Transverse colon (tissue), 4 donors: ENCODE measurements at regions of chr1 and their contacts with region 1.

Region 1: DNA sequence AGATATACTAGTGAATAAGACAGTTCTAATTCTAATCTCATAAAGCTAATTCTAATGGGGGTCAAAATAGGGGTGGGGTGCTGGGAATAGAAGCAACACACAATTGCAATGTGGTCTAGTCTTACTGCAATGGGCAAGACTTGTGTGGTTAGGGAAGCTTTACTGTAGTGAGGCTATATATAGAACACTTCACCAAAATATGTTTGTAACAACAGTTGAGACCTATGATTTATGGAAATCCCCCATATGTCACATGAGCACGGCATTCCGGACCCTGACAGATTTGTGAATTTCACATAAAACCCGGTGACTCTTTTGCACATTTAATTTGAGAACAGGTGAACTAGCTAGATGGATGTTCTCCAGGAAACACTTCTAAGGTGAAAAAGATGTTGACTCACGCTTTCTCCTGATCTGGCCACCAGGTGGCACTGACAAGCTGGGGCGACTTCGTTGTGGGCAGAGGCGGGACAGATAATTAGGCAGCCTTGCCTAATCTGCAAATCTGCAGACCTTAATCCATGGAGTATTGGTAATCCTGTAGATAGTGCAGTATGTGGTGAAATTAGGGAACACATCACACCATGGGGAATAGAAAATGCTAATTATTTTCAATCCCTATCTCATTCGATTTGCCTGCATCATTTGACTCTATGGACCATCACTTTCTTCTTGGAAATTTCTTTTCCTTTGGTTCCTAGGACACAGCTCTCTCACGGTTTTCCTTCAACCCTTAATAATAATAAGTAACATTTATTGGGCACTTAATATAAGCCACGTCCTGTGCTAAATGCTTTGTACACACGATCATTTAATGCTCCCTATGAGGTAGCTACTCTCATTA is 37.7 kb downstream of the KIAA0040 start:
- DNase-seq: peak; percentile 76
- H3K4me3 ChIP-seq: no peak overlapping the region
- H3K27ac ChIP-seq: no peak overlapping the region
- H3K4me1 ChIP-seq: peaks cover 0 to 8% (median 0%) of the 10 kb centered on the region in 4 donors
- H3K27me3 ChIP-seq: peaks cover 24% of the 10 kb centered on the region
- CTCF ChIP-seq: peak; percentile 86 to 88 (median 88)
- EP300 ChIP-seq: no peak
- POLR2A ChIP-seq: no peak

Region 2: GRCh38 chr1:174942547-174943255 is 212.2 kb before region 1 on chr1:
- in situ Hi-C with region 1: no loop called
- intact Hi-C with region 1: no loop called
- DNase-seq: no peak
- H3K4me3 ChIP-seq: no peak overlapping the region
- H3K27ac ChIP-seq: no peak overlapping the region
- H3K4me1 ChIP-seq: peaks cover 0 to 34% (median 6%) of the 10 kb centered on the region in 4 donors
- H3K27me3 ChIP-seq: no peaks in the 10 kb centered on the region
- CTCF ChIP-seq: no peak
- EP300 ChIP-seq: no peak
- POLR2A ChIP-seq: no peak

Region 3: GRCh38 chr1:175124861-175125260 is 30.0 kb before region 1 on chr1:
- in situ Hi-C with region 1: no loop called
- intact Hi-C with region 1: no loop called
- DNase-seq: no peak
- H3K4me3 ChIP-seq: no peak overlapping the region
- H3K27ac ChIP-seq: peak overlapping the region in 3 of 4 donors; percentile 8 to 55 (median 15)
- H3K4me1 ChIP-seq: peaks cover 6 to 30% (median 10%) of the 10 kb centered on the region in 4 donors
- H3K27me3 ChIP-seq: no peaks in the 10 kb centered on the region
- CTCF ChIP-seq: no peak
- EP300 ChIP-seq: no peak
- POLR2A ChIP-seq: no peak

Region 4: GRCh38 chr1:175221666-175222175 is 66.9 kb after region 1 on chr1:
- in situ Hi-C with region 1: loop called in 1 of 4 experiments (anchors 5 kb)
- intact Hi-C with region 1: no loop called
- DNase-seq: no peak
- H3K4me3 ChIP-seq: no peak overlapping the region
- H3K27ac ChIP-seq: peak overlapping the region in 2 of 4 donors; percentile 4 to 22
- H3K4me1 ChIP-seq: peaks cover 0 to 31% (median 9%) of the 10 kb centered on the region in 4 donors
- H3K27me3 ChIP-seq: no peaks in the 10 kb centered on the region
- CTCF ChIP-seq: peak in 4 of 5 experiments; percentile 25 to 49 (median 34)
- EP300 ChIP-seq: no peak
- POLR2A ChIP-seq: no peak

Region 5: GRCh38 chr1:175274368-175274767 is 119.5 kb after region 1 on chr1:
- in situ Hi-C with region 1: no loop called
- intact Hi-C with region 1: no loop called
- DNase-seq: no peak
- H3K4me3 ChIP-seq: no peak overlapping the region
- H3K27ac ChIP-seq: no peak overlapping the region
- H3K4me1 ChIP-seq: no peaks in the 10 kb centered on the region
- H3K27me3 ChIP-seq: no peaks in the 10 kb centered on the region
- CTCF ChIP-seq: no peak
- EP300 ChIP-seq: no peak
- POLR2A ChIP-seq: no peak

Region 6: GRCh38 chr1:175319418-175320230 is 164.8 kb after region 1 on chr1:
- in situ Hi-C with region 1: loop called (anchors 5 to 10 kb)
- intact Hi-C with region 1: loop called (anchors 2 kb)
- DNase-seq: peak; percentile 78
- H3K4me3 ChIP-seq: no peak overlapping the region
- H3K27ac ChIP-seq: peak overlapping the region in 1 of 4 donors; percentile 10
- H3K4me1 ChIP-seq: peaks cover 0 to 11% (median 2%) of the 10 kb centered on the region in 4 donors
- H3K27me3 ChIP-seq: no peaks in the 10 kb centered on the region
- CTCF ChIP-seq: peak; percentile 85 to 90 (median 86)
- EP300 ChIP-seq: no peak
- POLR2A ChIP-seq: no peak